HEK293 (cell line): ENCODE measurements at regions of chr20 and their contacts with region 1.

Region 1: DNA sequence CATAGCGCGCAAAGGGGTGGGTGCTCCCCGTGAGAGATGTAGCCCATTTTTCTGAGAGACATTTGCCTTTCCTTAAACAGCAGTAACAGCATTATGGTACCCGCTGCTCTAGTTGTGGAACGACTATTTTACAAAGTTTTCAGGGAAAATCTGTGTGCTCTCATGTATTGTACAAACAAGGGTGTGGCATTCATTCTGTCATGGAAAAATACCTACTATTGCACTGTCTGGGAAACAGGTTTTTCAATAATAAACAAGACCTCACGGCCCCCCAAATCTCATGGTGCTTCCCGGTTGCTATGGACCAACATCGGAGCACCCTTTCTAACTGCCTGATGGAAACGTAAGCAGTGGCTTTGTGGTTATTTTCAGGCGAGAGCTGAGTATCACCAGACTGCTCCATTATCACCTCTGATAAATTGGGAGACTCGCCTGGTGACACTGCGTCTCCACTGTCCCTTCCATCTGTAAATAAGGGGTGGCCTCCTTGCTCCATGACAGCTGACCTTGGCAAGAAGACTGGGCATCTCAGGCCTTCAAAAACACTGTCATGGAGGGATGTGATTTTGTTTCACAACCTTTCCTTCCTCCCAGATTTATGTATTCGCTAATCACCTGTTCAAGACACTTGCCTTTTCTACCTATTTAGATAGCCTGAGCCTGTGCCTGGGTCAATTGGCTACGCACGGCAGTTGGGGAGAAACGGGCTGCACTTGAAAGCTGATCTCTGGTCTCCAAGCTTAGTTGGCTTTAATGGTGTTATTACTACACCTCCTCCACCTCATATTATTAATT is 17.9 kb upstream of the CDH4 start:
- H3K4me3 ChIP-seq: no peak overlapping the region
- H3K27ac ChIP-seq: no peak overlapping the region
- H3K4me1 ChIP-seq: no peaks in the 10 kb centered on the region
- CTCF ChIP-seq: no peak

Region 2: DNA sequence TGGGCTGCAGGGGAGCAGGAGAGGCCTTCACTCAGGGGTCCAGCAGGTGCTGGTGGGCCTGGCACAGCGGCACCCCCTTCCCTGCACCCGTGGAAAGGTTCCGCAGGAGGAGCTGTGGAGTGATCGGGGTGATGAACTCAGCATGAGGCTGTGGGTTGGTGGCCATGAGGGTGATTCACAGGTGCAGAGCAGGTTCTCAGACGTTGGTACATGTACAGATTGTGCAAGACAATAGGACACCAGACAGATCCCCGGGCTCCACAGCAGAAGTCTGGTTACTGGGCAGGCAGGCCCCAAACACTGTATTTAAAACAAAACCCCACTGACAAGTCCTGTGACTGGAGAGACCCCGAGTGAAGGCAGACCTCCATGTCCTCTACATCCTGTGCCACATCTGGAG is 133.7 kb before region 1 on chr20:
- CTCF ChIA-PET with region 1: no interaction called
- POLR2A ChIA-PET with region 1: no interaction called
- H3K4me3 ChIP-seq: no peak overlapping the region
- H3K27ac ChIP-seq: no peak overlapping the region
- H3K4me1 ChIP-seq: no peaks in the 10 kb centered on the region
- CTCF ChIP-seq: no peak

Region 3: GRCh38 chr20:61185841-61186601 is 48.2 kb before region 1 on chr20:
- CTCF ChIA-PET with region 1: interaction called, 10 read pairs
- POLR2A ChIA-PET with region 1: no interaction called
- H3K4me3 ChIP-seq: no peak overlapping the region
- H3K27ac ChIP-seq: no peak overlapping the region
- H3K4me1 ChIP-seq: no peaks in the 10 kb centered on the region
- CTCF ChIP-seq: no peak

Region 4: DNA sequence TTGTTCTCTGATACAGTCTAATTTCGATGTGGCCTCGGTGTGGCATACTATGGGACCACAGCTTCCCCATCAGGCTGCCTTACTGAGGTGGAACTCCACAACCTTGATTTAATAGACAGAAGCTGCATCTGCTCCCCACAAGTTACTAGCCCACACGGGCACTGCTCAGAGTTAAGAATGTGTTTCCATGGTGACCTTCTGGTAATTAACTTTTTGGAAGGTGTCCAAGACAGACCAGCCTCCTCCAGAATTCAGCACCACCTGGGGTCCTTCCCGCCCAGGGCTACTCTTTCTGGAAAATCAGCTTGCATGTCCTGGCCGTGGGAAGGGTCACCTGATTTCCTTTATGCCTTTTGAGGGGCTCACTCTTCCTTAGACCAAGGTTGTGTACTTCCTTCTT is 30.9 kb before region 1 on chr20:
- CTCF ChIA-PET with region 1: interaction called, 11 read pairs
- POLR2A ChIA-PET with region 1: no interaction called
- H3K4me3 ChIP-seq: no peak overlapping the region
- H3K27ac ChIP-seq: no peak overlapping the region
- H3K4me1 ChIP-seq: no peaks in the 10 kb centered on the region
- CTCF ChIP-seq: no peak

Region 5: DNA sequence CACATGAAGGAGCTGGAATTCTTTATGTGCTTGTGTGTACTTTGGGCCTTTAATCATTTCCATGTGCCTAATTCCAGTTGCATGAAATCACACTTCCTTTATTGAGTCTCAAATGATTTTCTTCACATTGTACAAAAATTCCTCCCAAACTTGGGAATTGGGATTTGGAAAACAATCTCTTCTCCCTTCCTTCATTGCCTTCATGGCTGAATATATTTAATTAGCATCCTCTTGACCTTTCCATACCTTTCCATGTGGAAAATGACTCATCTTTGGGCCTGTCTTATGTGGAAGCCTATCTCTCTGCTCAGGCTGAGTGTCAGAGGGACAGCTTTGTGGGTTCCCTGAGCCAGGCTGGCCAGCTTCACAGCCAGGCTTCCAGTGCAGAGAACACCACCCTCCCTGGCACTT is 15.2 kb before region 1 on chr20:
- CTCF ChIA-PET with region 1: interaction called, 13 read pairs
- POLR2A ChIA-PET with region 1: no interaction called
- H3K4me3 ChIP-seq: no peak overlapping the region
- H3K27ac ChIP-seq: no peak overlapping the region
- H3K4me1 ChIP-seq: no peaks in the 10 kb centered on the region
- CTCF ChIP-seq: no peak